HepG2 (cell line): ENCODE measurements at regions of chr1 and their contacts with region 1.

Region 1: DNA sequence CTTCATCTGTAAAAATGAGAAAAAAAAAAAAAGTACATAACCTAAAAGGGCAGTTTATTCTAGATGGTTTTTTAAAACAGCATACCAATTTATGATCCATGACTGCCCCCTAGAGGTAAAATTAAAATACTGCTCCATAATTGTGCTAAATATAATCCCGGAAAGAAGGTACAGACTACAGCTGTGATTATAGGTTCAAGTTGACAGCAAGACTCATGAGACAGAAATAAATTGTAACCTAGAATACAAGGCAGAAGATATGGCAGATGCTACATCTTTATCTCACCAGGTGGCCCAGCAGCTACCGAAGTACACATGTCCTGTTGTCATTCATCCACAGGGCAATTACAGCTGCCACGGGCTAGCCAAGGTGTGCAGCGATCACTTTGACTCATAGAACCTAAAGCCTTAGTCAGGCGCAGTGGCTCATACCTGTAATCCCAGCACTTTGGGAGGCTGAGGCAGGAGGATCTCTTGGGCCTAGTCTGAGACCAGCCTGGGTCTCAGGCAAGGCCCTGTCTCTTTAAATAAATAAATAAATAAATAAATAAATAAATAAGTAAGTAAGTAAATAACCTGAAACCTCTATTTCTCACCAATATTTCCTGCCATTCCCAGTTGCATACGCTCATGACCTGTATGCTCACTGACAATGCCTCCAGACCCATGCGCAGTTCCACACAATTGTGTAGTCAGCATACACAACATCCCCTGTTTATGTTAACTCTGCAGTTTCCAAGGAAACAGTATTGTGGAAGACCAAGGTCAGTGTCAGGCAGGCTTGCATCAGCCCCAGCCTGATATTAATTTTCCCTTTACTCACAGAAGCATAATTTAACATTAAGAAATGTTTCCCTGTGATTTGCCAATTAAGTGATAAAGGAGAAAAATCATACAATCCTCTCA is 18.3 kb upstream of the PPIE start:
- DNase-seq: peak; percentile 51
- ATAC-seq: peak; percentile 29; the same call in 1 of the 3 replicates
- H3K4me3 ChIP-seq: no peak overlapping the region
- H3K27ac ChIP-seq: no peak overlapping the region
- H3K4me1 ChIP-seq: no peaks in the 10 kb centered on the region
- H3K27me3 ChIP-seq: peaks cover 0 to 7% of the 10 kb centered on the region in 2 experiments; a peak in 1 of 5 replicates
- CTCF ChIP-seq: peak; percentile 64
- EP300 ChIP-seq: no peak
- POLR2A ChIP-seq: no peak
- RAD21 ChIP-seq: no peak

Region 2: DNA sequence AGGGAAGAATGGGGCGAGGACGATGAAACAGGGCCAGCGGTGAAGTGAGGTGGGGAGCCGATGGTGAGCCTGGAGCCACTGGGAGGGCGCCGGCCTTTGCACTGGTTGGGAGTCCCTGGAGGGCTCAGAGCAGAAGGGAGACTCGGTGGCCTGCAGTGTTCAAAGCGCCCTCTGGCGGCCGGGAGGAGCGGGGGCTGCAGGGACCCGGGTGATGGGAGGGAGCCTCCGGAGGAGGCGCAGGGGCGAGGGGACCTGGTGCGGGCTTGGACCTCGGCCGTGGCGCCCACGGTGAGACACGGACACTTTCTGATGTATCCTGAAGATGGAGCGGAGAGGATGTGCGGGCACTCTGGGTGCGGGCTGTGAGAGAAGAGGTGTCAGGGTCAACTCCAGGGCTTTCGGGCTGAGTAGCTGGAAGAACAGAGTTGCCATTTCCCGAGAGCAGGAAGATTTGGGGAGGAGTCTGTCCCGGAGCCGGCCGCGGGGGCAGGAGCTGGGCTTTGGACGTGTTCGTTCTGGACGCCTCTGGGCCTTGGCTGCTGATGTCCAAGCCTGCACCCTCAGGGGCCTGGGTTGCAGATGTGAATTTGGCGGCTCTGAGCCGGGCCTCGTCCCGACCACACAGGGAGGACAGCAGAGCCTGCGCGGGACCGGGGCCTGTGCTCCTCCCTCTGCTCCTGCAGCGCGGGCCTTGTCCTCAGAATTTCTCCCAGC is 110.6 kb before region 1 on chr1:
- CTCF ChIA-PET with region 1: interaction called, 12 read pairs
- POLR2A ChIA-PET with region 1: no interaction called
- in situ Hi-C with region 1: loop called (anchors 10 kb)
- intact Hi-C with region 1: loop called (anchors 5 kb)
- DNase-seq: peak; percentile 66
- ATAC-seq: peak; percentile 98
- H3K4me3 ChIP-seq: peak overlapping the region in 1 of 3 experiments; percentile 25; a peak in 1 of 6 replicates
- H3K27ac ChIP-seq: no peak overlapping the region
- H3K4me1 ChIP-seq: 0 out of 2 replicates have a peak, but pooled peaks cover 11% of the 10 kb centered on the region
- H3K27me3 ChIP-seq: no peaks in the 10 kb centered on the region; a peak in 1 of 5 replicates
- CTCF ChIP-seq: peak; percentile 87
- EP300 ChIP-seq: no peak
- POLR2A ChIP-seq: no peak
- RAD21 ChIP-seq: peak; percentile 48; the same call in 1 of the 2 replicates

Region 3: DNA sequence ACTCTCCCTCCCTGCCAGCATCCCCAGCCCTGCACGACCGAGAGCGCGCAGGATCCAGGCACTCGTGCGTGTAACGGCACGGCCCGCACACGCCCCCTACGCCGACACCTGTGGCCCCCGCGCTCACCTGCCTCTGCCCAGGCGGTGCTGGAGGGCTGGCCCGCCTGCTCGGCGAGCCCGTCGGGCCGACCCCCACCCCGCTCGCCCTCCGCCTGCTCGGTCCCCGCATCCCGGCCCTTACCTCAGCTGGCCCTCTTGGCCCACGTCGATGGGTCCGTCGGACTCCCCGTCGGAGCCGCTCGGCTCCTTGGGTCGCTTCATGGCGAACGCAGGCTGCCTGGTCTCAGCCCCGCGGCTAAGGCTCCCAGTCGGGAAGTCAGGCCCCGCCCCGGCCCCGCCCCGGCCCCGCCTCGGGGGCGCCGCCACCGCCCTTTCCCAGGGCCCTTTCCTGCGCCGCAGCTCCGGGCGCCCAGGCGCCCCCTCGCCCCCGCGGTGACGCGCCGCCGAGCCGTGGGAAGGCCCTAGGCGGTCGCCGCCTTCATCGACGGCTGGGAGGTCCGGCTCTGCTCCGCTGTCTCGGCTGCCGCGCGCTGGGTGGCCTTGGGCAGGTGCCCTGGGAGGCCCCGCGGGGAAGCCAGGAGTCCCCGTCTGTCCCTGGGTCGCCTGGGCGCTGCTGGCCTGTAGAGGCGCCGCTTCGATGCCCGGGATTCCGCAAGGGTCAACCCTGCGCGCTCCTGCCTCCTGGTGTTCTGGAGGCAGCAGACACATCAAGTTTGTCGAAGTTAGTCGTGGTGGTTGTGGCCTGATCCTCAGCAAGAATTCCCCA is 80.8 kb before region 1 on chr1 and contains the start of gene HEYL:
- CTCF ChIA-PET with region 1: no interaction called
- POLR2A ChIA-PET with region 1: no interaction called
- in situ Hi-C with region 1: no loop called
- intact Hi-C with region 1: no loop called
- DNase-seq: peak; percentile 40
- ATAC-seq: peak; percentile 92
- H3K4me3 ChIP-seq: peak within 1 kb of the TSS in 2 of 3 experiments; percentile 40 to 58; a peak in 4 of 6 replicates
- H3K27ac ChIP-seq: no peak within 1 kb of the TSS
- H3K4me1 ChIP-seq: no peaks in the 10 kb centered on the region
- H3K27me3 ChIP-seq: peaks cover 1 to 33% of the 10 kb centered on the region in 2 experiments; a peak in 4 of 5 replicates
- CTCF ChIP-seq: peak; percentile 62
- EP300 ChIP-seq: no peak
- POLR2A ChIP-seq: no peak
- RAD21 ChIP-seq: peak; percentile 64
- total RNA-seq, gene HEYL: 0.04 TPM in 1 of 2 replicates, not detected in the other

Region 4: DNA sequence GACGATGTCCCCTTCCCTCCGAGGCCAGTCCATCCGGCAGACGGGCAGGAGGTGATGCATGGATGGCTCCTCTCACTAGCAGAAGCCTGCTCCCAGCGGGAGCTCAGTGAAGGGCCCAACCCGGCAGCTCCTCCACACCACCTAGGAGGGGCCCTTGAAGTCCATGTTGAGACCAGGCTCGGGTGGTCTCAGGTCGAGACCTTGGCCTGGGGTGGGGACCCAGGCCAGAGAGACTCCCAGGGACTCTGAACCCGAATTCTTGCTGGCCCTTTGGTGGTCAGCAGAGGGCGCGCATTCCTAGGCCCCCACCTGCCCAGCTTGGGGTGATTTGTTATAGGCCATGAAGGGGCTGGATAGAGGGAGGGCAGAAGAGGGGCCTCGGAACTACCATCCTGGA is 47.8 kb before region 1 on chr1:
- CTCF ChIA-PET with region 1: interaction called, 8 read pairs
- POLR2A ChIA-PET with region 1: no interaction called
- in situ Hi-C with region 1: no loop called
- intact Hi-C with region 1: loop called (anchors 5 kb)
- DNase-seq: no peak
- ATAC-seq: peak; percentile 70
- H3K4me3 ChIP-seq: no peak overlapping the region
- H3K27ac ChIP-seq: no peak overlapping the region
- H3K4me1 ChIP-seq: peaks cover 8% of the 10 kb centered on the region; the same call in 1 of the 2 replicates
- H3K27me3 ChIP-seq: peaks cover 5 to 52% of the 10 kb centered on the region in 2 experiments; a peak in 4 of 5 replicates
- CTCF ChIP-seq: peak; percentile 67
- EP300 ChIP-seq: no peak
- POLR2A ChIP-seq: no peak
- RAD21 ChIP-seq: no peak

Region 5: GRCh38 chr1:39701049-39701439 is 19.3 kb before region 1 on chr1:
- CTCF ChIA-PET with region 1: interaction called, 17 read pairs
- POLR2A ChIA-PET with region 1: no interaction called
- in situ Hi-C with region 1: no loop called
- intact Hi-C with region 1: no loop called
- DNase-seq: no peak
- ATAC-seq: peak; percentile 19; the same call in 1 of the 3 replicates
- H3K4me3 ChIP-seq: 0 out of 6 replicates have a peak overlapping the region, but pooled peaks of 1 of the 3 experiments have one; percentile 4
- H3K27ac ChIP-seq: no peak overlapping the region
- H3K4me1 ChIP-seq: peaks cover 11% of the 10 kb centered on the region
- H3K27me3 ChIP-seq: peaks cover 0 to 12% of the 10 kb centered on the region in 2 experiments; a peak in 1 of 5 replicates
- CTCF ChIP-seq: no peak
- EP300 ChIP-seq: no peak
- POLR2A ChIP-seq: no peak
- RAD21 ChIP-seq: no peak